ENCODE measurements at regions of chr3 and their contacts with region 1.

Region 1: GRCh38 chr3:48927928-48928327 is 9.3 kb downstream of the ARIH2 start:
- DNase-seq: no peak
- H3K4me3 ChIP-seq: no peak overlapping the region
- H3K27ac ChIP-seq: no peak overlapping the region
- H3K4me1 ChIP-seq: 0 out of 2 replicates have a peak, but pooled peaks cover 13% of the 10 kb centered on the region
- H3K27me3 ChIP-seq: no peaks in the 10 kb centered on the region
- CTCF ChIP-seq: no peak

Region 2: GRCh38 chr3:48966876-48967361 is 39.0 kb after region 1 on chr3:
- CTCF ChIA-PET with region 1: no interaction called
- POLR2A ChIA-PET with region 1: no interaction called
- intact Hi-C with region 1: no loop called
- DNase-seq: no peak
- H3K4me3 ChIP-seq: no peak overlapping the region
- H3K27ac ChIP-seq: no peak overlapping the region
- H3K4me1 ChIP-seq: no peaks in the 10 kb centered on the region
- H3K27me3 ChIP-seq: no peaks in the 10 kb centered on the region
- CTCF ChIP-seq: no peak

Region 3: GRCh38 chr3:48997714-48998641 is 70.0 kb after region 1 on chr3:
- CTCF ChIA-PET with region 1: no interaction called
- POLR2A ChIA-PET with region 1: interaction called, 11 read pairs
- intact Hi-C with region 1: no loop called
- DNase-seq: no peak
- H3K4me3 ChIP-seq: no peak overlapping the region
- H3K27ac ChIP-seq: no peak overlapping the region
- H3K4me1 ChIP-seq: no peaks in the 10 kb centered on the region
- H3K27me3 ChIP-seq: no peaks in the 10 kb centered on the region
- CTCF ChIP-seq: no peak

Region 4: GRCh38 chr3:49013755-49014628 is 86.1 kb after region 1 on chr3:
- CTCF ChIA-PET with region 1: no interaction called
- POLR2A ChIA-PET with region 1: interaction called, 15 read pairs
- intact Hi-C with region 1: no loop called
- DNase-seq: peak in 1 of 2 experiments; percentile 50
- H3K4me3 ChIP-seq: no peak overlapping the region
- H3K27ac ChIP-seq: no peak overlapping the region
- H3K4me1 ChIP-seq: peaks cover 8% of the 10 kb centered on the region
- H3K27me3 ChIP-seq: no peaks in the 10 kb centered on the region
- CTCF ChIP-seq: peak; percentile 66